ENCODE measurements at regions of chr5 and their contacts with region 1.

Region 1: GRCh38 chr5:131165119-131165727 is at the start of gene HINT1:
- DNase-seq: peak; percentile 71 to 96 (median 91)

Region 2: DNA sequence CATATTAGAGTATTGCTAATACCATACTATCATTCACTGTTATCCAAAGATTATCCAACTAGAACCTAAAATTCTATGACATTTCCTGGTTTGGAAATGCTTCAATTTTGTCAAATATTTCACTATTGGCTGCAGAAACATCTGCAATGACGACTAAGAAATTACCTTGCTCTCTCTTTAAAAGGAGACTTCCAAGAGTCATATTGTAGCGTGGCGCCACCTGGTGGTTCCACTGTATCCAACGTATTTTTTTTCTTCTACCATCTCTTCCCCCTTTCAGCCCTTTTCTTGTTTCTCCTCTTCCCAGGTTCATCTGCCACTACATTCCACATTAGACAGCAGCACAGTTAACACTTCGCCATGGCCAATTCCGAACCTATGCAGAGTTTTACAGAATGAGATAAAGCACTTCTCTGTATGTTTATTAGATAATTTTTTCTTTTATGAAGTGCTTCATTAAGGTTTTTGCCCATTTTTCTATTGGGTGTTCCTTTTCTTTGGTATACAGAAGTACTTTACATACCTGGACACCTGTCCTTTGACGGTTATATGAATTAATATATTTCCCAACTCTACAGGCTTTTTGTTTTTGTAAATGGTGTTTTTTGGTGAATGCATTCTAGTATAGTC is 252.1 kb after region 1 on chr5:
- intact Hi-C with region 1: loop called (anchors 2 kb)
- DNase-seq: peak; percentile 55 to 95 (median 84)

Measured in head of caudate nucleus (tissue), 42 donors.